Activated CD8-positive, alpha-beta memory T cell treated with anti-CD3 and anti-CD28 coated beads, Interleukin-2, amount 10 ng/mL, durations not matched to agents 7 days and 5 days (primary cell): ENCODE measurements at regions of chr20 and their contacts with region 1.

Region 1: DNA sequence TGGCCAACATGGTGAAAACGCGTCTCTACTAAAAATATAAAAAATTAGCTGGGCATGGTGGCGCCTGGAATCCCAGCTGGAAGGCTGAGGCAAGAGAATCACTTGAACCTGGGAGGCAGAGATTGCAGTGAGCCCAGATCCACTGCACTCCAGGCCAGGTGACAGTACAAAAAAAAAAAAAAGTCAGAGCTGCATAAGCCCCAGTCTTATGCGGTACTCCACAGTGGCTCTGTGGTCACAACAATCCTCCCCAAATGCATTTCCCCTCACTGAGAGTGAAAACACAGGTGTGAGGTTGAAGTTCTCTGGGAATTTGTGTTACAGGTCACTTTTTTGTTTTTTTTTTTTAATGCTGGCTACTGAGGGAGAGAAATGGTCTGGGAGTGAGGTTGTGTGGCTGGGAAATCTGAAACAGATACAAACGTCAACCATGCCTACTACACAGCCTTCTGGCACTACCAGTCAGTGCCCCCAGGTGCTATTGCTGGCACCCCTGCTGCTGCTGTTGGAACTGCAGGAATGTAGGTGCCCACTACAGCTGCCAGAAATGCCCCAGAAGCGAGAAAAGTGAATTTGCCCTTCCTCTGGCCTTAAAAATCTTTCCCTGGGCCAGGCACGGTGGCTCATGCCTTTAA is 5.7 kb downstream of the MRPS26 start:
- DNase-seq: no peak
- ATAC-seq: no peak
- H3K4me3 Mint-ChIP-seq: no peak overlapping the region
- H3K27ac Mint-ChIP-seq: no peak overlapping the region
- H3K4me1 Mint-ChIP-seq: peaks cover 31% of the 10 kb centered on the region
- H3K27me3 Mint-ChIP-seq: no peaks in the 10 kb centered on the region

Region 2: DNA sequence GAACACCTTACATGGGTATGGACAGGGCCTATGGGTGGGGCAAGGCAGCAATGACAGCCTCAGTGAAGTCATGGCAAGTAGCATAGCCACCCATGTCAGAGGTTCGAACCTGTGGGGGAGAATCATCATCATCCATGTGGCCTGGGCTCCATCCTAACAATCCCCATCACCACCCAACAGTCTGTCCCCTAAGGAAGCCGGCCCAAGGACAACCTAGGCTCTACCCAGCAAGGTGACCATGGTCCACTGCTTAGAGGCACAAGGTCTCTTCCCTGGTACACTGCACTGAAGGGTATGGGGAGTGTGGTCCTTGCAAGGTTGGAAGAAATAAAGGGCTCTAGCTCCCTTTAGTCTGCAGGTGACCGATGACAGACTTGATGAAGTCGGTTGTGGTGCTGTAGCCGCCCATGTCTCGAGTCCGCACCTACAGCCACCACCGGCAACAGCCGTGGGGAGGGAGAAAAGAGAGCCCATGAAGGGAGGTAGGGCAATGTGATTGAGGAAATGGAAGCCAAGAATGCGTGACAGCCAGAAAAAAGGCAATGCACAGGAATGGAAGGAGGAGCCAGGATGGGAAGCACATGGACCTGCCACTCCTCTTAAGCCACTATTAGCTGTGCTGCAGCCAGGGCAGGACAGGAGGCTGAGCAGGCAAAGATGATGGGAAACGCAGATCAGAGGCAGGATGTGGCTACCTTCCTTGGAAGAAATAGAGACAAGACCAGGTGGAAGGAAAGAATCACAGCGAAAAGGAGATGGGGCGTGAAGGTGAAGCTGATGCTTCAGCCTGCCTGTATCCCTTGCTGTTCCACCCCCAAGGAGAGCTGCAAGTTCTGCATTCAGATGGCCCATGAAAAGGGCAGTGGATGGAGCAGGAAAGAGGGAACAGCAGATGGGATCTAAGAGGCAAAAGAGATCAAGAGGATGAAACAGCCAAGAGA is 392.8 kb before region 1 on chr20:
- CTCF ChIA-PET with region 1: no interaction called
- DNase-seq: no peak
- ATAC-seq: no peak
- H3K4me3 Mint-ChIP-seq: no peak overlapping the region
- H3K27ac Mint-ChIP-seq: peak overlapping the region; percentile 52
- H3K4me1 Mint-ChIP-seq: peaks cover 51% of the 10 kb centered on the region
- H3K27me3 Mint-ChIP-seq: no peaks in the 10 kb centered on the region

Region 3: GRCh38 chr20:3068986-3069900 is 17.7 kb after region 1 on chr20:
- CTCF ChIA-PET with region 1: interaction called, 13 read pairs
- DNase-seq: peak; percentile 59
- ATAC-seq: no peak
- H3K4me3 Mint-ChIP-seq: no peak overlapping the region
- H3K27ac Mint-ChIP-seq: no peak overlapping the region
- H3K4me1 Mint-ChIP-seq: peaks cover 13% of the 10 kb centered on the region
- H3K27me3 Mint-ChIP-seq: peaks cover 18% of the 10 kb centered on the region

Region 4: GRCh38 chr20:3109350-3110302 is 58.1 kb after region 1 on chr20:
- CTCF ChIA-PET with region 1: interaction called, 10 read pairs
- DNase-seq: no peak
- ATAC-seq: no peak
- H3K4me3 Mint-ChIP-seq: no peak overlapping the region
- H3K27ac Mint-ChIP-seq: no peak overlapping the region
- H3K4me1 Mint-ChIP-seq: no peaks in the 10 kb centered on the region
- H3K27me3 Mint-ChIP-seq: no peaks in the 10 kb centered on the region

Region 5: GRCh38 chr20:3156811-3157619 is 105.5 kb after region 1 on chr20:
- CTCF ChIA-PET with region 1: interaction called, 11 read pairs
- DNase-seq: no peak
- ATAC-seq: peak; percentile 80
- H3K4me3 Mint-ChIP-seq: peak overlapping the region; percentile 87
- H3K27ac Mint-ChIP-seq: peak overlapping the region; percentile 90
- H3K4me1 Mint-ChIP-seq: peaks cover 52% of the 10 kb centered on the region
- H3K27me3 Mint-ChIP-seq: no peaks in the 10 kb centered on the region

Region 6: GRCh38 chr20:3316136-3316535 is 264.6 kb after region 1 on chr20:
- CTCF ChIA-PET with region 1: interaction called, 11 read pairs
- DNase-seq: no peak
- ATAC-seq: no peak
- H3K4me3 Mint-ChIP-seq: no peak overlapping the region
- H3K27ac Mint-ChIP-seq: no peak overlapping the region
- H3K4me1 Mint-ChIP-seq: no peaks in the 10 kb centered on the region
- H3K27me3 Mint-ChIP-seq: no peaks in the 10 kb centered on the region